GM10248 (cell line): ENCODE measurements at regions of chr20 and their contacts with region 1.

Region 1: GRCh38 chr20:45890985-45891983 is at the starts of genes CTSA and NEURL2:
- DNase-seq: peak; percentile 98
- CTCF ChIP-seq: no peak

Region 2: GRCh38 chr20:45823949-45824835 is 67.1 kb before region 1 on chr20:
- CTCF ChIA-PET with region 1: no interaction called
- POLR2A ChIA-PET with region 1: no interaction called
- DNase-seq: peak; percentile 65
- CTCF ChIP-seq: peak; percentile 53

Region 3: DNA sequence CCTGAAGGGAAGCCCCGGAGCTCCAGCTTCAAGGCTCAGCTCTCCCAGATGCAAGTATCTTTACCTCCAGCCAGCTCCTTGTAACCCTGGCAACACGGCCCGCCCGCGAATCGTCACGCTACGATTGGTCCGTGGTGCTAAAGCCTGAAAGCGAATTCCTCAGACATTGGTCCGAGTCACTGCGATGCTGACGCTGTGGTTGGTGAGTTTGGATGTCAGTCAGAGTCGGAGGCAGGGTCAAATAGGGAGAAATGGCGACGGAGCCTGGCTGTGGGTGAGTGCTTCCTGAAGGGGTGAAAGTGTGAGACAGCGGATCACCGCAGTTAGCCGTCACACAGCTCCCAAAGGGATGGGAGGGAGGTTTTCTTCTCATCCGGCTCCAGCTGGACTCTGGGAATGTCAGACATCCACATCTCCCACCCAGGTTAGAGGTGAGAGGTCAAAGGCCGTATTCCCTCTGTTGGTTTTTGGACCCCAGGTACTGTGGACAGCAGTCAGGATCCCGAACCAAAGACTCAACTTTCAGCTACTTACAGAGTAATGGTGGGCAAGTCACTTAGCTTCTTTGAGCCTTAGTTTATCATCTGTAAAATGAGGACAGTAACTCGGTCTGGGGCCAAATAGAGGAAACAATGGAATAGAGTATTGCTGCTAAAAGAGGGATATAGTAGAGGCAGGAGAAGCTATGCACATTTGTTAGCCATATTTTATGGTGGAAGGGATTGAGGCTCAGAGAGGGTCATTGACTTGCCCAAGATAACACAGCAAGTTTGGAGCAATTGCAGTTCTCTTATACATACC is 10.1 kb before region 1 on chr20 and contains the start of gene ZSWIM1:
- CTCF ChIA-PET with region 1: interaction called, 19 read pairs
- POLR2A ChIA-PET with region 1: interaction called, 4 read pairs
- DNase-seq: peak; percentile 98
- CTCF ChIP-seq: no peak